ENCODE measurements at regions of chr6 and their contacts with region 1.

Region 1: GRCh38 chr6:81997091-81997926 is 244.8 kb upstream of the TENT5A start:
- DNase-seq: peak; percentile 84
- H3K4me3 ChIP-seq: peak overlapping the region in 1 of 3 experiments; percentile 0
- H3K27ac ChIP-seq: peak overlapping the region; percentile 98
- H3K4me1 ChIP-seq: peaks cover 50% of the 10 kb centered on the region
- H3K27me3 ChIP-seq: no peaks in the 10 kb centered on the region
- CTCF ChIP-seq: no peak

Region 2: GRCh38 chr6:81766482-81767069 is 230.7 kb before region 1 on chr6:
- CTCF ChIA-PET with region 1: no interaction called
- dilution Hi-C with region 1: no loop called
- in situ Hi-C with region 1: loop called (anchors 25 kb)
- intact Hi-C with region 1: loop called (anchors 5 kb)
- DNase-seq: peak; percentile 76
- H3K4me3 ChIP-seq: no peak overlapping the region
- H3K27ac ChIP-seq: no peak overlapping the region
- H3K4me1 ChIP-seq: peaks cover 39% of the 10 kb centered on the region
- H3K27me3 ChIP-seq: no peaks in the 10 kb centered on the region
- CTCF ChIP-seq: no peak

Region 3: GRCh38 chr6:81787313-81788068 is 209.8 kb before region 1 on chr6:
- CTCF ChIA-PET with region 1: no interaction called
- dilution Hi-C with region 1: no loop called
- in situ Hi-C with region 1: no loop called
- intact Hi-C with region 1: no loop called
- DNase-seq: peak; percentile 44
- H3K4me3 ChIP-seq: no peak overlapping the region
- H3K27ac ChIP-seq: no peak overlapping the region
- H3K4me1 ChIP-seq: peaks cover 3% of the 10 kb centered on the region
- H3K27me3 ChIP-seq: peaks cover 1% of the 10 kb centered on the region
- CTCF ChIP-seq: no peak

Region 4: DNA sequence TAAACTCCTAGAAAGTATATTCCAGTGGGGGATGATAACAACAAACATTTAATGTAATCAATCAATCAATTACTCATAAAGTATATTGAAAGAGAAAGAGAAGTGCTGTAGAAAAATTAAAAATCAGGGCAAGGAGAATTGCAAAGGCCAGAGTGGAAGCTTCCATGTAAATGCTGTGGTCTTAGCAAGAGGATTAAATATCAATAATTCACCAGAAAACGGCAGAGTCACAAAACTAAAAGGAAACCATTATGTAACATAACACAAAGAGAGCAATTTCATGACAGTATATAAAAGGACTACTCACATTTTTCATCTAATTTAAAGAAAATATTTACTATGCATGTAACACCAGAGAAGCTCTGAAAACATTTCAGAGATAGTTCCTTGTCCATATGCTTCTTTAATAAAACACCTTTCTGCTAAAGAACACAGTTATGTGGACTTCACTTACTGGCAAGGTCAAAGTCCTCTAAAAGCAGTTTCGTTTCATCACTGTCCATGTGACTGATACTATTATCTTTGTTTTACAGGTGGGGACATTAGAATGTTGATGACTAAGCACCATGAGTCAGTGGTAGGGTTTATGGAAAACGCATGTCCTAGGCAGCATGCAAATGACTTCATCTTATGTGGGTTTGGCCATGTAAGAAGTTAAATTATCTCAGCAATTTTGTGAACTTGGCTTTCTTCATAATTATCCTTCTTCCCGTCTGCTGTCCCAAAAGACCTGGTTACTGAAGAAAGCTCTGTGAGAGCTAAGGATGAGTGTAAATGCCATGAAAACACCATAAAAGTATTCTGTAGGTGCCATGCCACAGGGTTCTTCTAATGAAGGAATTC is 59.1 kb before region 1 on chr6:
- CTCF ChIA-PET with region 1: no interaction called
- dilution Hi-C with region 1: no loop called
- in situ Hi-C with region 1: no loop called
- intact Hi-C with region 1: loop called (anchors 1 kb)
- DNase-seq: peak; percentile 97
- H3K4me3 ChIP-seq: no peak overlapping the region
- H3K27ac ChIP-seq: peak overlapping the region; percentile 98
- H3K4me1 ChIP-seq: peaks cover 29% of the 10 kb centered on the region
- H3K27me3 ChIP-seq: no peaks in the 10 kb centered on the region
- CTCF ChIP-seq: no peak

Region 5: GRCh38 chr6:82022601-82023102 is 25.3 kb after region 1 on chr6:
- CTCF ChIA-PET with region 1: no interaction called
- dilution Hi-C with region 1: no loop called
- in situ Hi-C with region 1: no loop called
- intact Hi-C with region 1: loop called (anchors 2 kb)
- DNase-seq: peak; percentile 94
- H3K4me3 ChIP-seq: no peak overlapping the region
- H3K27ac ChIP-seq: peak overlapping the region; percentile 96
- H3K4me1 ChIP-seq: peaks cover 34% of the 10 kb centered on the region
- H3K27me3 ChIP-seq: no peaks in the 10 kb centered on the region
- CTCF ChIP-seq: no peak

Measured in mammary epithelial cell (primary cell).